ENCODE measurements at regions of chr10 and their contacts with region 1.

Region 1: DNA sequence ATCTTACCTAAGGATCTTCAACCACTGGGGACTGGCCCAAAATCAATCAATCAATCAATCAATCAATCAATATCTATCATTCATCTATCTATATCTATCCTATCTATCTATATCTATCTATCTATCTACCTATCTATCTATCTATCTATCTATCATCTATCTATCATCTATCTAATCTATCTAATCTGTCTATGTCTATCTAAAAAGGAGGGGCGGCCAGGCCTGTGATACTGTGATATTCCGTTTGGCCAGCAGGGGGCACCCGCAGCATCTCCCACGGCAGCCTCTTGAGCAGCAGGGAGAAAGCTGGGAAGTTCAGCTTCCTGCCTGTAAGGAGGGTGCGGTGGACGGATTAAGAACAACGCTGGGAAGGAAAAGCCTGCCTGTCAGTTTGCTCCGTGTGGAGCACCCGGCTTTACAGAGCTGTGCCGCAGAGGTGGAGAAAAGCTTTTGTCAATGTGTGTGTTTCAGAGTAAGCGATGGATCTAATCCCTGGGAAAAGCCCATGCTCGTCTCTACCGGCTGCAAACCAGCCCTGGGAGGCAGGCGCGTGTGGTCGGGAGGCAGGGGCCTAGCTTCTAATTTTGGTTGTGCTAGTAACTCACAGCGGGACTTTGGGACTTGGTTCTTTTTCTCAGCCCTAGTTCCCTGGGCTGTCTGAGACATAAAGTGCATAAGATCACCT is 125.0 kb downstream of the SH2D4B start:
- DNase-seq: peak; percentile 15 to 77 (median 56)
- ATAC-seq: peak; percentile 65 to 72 (median 68)
- H3K4me3 ChIP-seq: peak overlapping the region in 1 of 2 donors; percentile 6
- H3K4me3 Mint-ChIP-seq: peak overlapping the region; percentile 15 to 61 (median 37)
- H3K27ac ChIP-seq: no peak overlapping the region
- H3K27ac Mint-ChIP-seq: no peak overlapping the region
- H3K4me1 ChIP-seq: peaks cover 0 to 4% of the 10 kb centered on the region in 2 experiments
- H3K4me1 Mint-ChIP-seq: peaks cover 3 to 7% (median 5%) of the 10 kb centered on the region in 3 donors
- H3K27me3 ChIP-seq: peaks cover 0 to 35% of the 10 kb centered on the region in 2 experiments
- H3K27me3 Mint-ChIP-seq: peaks cover 13 to 22% of the 10 kb centered on the region in 2 donors

Region 2: GRCh38 chr10:80104066-80104926 is 558.4 kb before region 1 on chr10:
- CTCF ChIA-PET with region 1: interaction called in 1 of 2 experiments, 10 read pairs
- POLR2A ChIA-PET with region 1: no interaction called
- DNase-seq: peak in 5 of 35 experiments; percentile 8 to 44 (median 18)
- ATAC-seq: peak; percentile 43 to 91 (median 64)
- H3K4me3 ChIP-seq: no peak overlapping the region
- H3K4me3 Mint-ChIP-seq: no peak overlapping the region
- H3K27ac ChIP-seq: peak overlapping the region; percentile 9
- H3K27ac Mint-ChIP-seq: peak overlapping the region in 1 of 2 donors; percentile 11
- H3K4me1 ChIP-seq: peaks cover 0 to 4% of the 10 kb centered on the region in 2 experiments
- H3K4me1 Mint-ChIP-seq: peaks cover 0 to 23% (median 17%) of the 10 kb centered on the region in 3 donors
- H3K27me3 ChIP-seq: peaks cover 0 to 3% of the 10 kb centered on the region in 2 experiments
- H3K27me3 Mint-ChIP-seq: no peaks in the 10 kb centered on the region

Region 3: DNA sequence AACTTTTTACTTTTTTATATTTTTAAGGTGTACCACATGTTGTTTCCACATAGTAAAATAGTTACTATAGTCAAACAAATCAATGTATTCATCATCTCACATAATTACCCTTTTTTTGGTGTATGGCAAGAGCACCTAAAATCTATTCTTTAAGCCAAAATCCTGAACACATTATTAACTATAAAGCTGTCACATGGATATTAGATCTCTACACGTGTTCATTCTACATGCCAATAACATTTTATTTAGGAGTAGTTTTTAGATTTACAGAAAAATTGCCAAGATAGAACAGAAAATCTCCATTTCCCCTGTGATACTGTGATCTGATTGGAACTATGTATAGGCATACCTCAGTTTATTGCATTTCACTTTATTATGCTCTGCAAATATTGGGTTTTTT is 12.1 kb after region 1 on chr10:
- CTCF ChIA-PET with region 1: interaction called, 4 to 10 read pairs
- POLR2A ChIA-PET with region 1: no interaction called
- DNase-seq: no peak
- ATAC-seq: no peak
- H3K4me3 ChIP-seq: no peak overlapping the region
- H3K4me3 Mint-ChIP-seq: no peak overlapping the region
- H3K27ac ChIP-seq: no peak overlapping the region
- H3K27ac Mint-ChIP-seq: no peak overlapping the region
- H3K4me1 ChIP-seq: no peaks in the 10 kb centered on the region
- H3K4me1 Mint-ChIP-seq: no peaks in the 10 kb centered on the region
- H3K27me3 ChIP-seq: peaks cover 0 to 6% of the 10 kb centered on the region in 2 experiments
- H3K27me3 Mint-ChIP-seq: peaks cover 9 to 15% of the 10 kb centered on the region in 2 donors

Region 4: DNA sequence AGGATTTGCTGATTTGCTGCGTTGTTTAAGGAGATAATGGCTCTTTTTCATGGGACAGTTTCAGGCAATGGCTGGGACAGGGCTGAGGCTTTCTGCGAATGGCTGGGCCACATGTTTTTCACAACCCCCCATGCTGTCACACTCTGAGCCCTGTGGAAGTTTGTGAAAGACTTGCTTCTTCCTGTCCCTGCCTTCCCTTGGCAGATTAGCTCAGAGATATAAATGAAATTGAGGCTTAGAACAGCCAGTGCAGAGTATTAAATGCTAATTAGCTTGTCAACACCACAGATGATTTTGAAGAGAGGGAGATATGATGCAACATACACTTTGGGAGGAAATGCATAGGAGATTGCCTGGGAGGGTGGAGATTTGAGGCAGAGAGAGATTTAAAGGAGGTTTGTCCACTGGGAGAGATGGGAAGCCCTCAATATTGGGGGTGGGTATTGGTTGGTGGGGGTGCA is 107.0 kb after region 1 on chr10:
- CTCF ChIA-PET with region 1: no interaction called
- POLR2A ChIA-PET with region 1: interaction called in 1 of 2 experiments, 13 read pairs
- DNase-seq: no peak
- ATAC-seq: no peak
- H3K4me3 ChIP-seq: no peak overlapping the region
- H3K4me3 Mint-ChIP-seq: no peak overlapping the region
- H3K27ac ChIP-seq: no peak overlapping the region
- H3K27ac Mint-ChIP-seq: no peak overlapping the region
- H3K4me1 ChIP-seq: no peaks in the 10 kb centered on the region
- H3K4me1 Mint-ChIP-seq: no peaks in the 10 kb centered on the region
- H3K27me3 ChIP-seq: no peaks in the 10 kb centered on the region
- H3K27me3 Mint-ChIP-seq: peaks cover 21 to 39% of the 10 kb centered on the region in 2 donors

Measured in T-cell (primary cell).